ENCODE measurements at regions of chr10 and their contacts with region 1.

Region 1: GRCh38 chr10:133109711-133110110 is 22.0 kb downstream of the ADGRA1 start:
- DNase-seq: no peak
- ATAC-seq: peak; percentile 37 to 83 (median 72)
- H3K4me3 ChIP-seq: no peak overlapping the region
- H3K27ac ChIP-seq: peak overlapping the region; percentile 84
- H3K4me1 ChIP-seq: peaks cover 15% of the 10 kb centered on the region
- H3K27me3 ChIP-seq: no peaks in the 10 kb centered on the region
- CTCF ChIP-seq: no peak

Region 2: GRCh38 chr10:132826524-132827422 is 282.9 kb before region 1 on chr10:
- intact Hi-C with region 1: no loop called
- DNase-seq: peak in 1 of 2 donors; percentile 4
- ATAC-seq: no peak
- H3K4me3 ChIP-seq: no peak overlapping the region
- H3K27ac ChIP-seq: no peak overlapping the region
- H3K4me1 ChIP-seq: no peaks in the 10 kb centered on the region
- H3K27me3 ChIP-seq: no peaks in the 10 kb centered on the region
- CTCF ChIP-seq: no peak

Region 3: DNA sequence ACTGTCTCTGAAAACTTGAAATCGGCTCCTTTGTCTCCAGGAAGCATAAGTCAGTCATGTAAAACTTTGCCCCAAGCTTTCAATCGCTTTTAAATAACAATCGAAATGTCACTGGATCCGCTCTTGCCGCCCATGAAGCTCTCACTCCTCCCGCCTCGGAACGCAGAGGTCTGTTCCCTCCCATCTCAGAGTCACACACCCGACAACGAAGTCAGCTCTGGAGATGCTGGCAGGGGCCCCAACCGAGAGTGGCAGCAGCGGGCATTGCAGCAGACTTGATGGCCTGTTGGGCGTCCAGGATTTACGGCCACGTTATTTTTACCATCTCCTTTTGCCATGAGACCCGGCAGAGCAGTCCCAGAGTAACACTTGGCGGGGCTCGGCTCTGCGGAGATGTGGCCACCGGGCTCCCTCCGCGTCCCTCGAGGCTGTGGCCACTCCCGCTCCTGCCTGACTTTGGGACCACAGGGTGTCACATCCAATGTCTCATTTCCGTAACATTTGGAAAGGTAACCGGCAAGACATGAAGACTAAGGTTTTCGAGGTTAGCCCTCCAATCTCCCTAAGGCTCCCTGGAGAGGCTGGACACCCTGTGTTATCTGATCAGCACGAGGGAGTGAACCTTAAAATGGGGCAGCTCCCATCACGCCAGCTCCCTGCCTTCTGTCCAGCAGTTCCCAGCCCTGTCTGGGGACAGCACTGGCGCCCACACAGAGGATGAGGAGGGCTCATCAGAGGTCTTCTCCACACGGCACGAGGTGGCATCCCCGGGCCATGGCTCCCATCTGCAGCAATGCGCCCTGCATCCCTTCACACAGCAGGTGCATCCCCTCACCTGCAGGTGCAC is 84.8 kb before region 1 on chr10:
- intact Hi-C with region 1: loop called in 1 of 2 experiments (anchors 5 kb)
- DNase-seq: no peak
- ATAC-seq: peak in 3 of 4 donors; percentile 61 to 74 (median 71)
- H3K4me3 ChIP-seq: no peak overlapping the region
- H3K27ac ChIP-seq: no peak overlapping the region
- H3K4me1 ChIP-seq: no peaks in the 10 kb centered on the region
- H3K27me3 ChIP-seq: peaks cover 0 to 41% (median 10%) of the 10 kb centered on the region in 3 donors
- CTCF ChIP-seq: no peak